Activated CD4-positive, alpha-beta memory T cell treated with anti-CD3 and anti-CD28 coated beads for 36 hours (primary cell): ENCODE measurements at regions of chr5 and their contacts with region 1.

Region 1: DNA sequence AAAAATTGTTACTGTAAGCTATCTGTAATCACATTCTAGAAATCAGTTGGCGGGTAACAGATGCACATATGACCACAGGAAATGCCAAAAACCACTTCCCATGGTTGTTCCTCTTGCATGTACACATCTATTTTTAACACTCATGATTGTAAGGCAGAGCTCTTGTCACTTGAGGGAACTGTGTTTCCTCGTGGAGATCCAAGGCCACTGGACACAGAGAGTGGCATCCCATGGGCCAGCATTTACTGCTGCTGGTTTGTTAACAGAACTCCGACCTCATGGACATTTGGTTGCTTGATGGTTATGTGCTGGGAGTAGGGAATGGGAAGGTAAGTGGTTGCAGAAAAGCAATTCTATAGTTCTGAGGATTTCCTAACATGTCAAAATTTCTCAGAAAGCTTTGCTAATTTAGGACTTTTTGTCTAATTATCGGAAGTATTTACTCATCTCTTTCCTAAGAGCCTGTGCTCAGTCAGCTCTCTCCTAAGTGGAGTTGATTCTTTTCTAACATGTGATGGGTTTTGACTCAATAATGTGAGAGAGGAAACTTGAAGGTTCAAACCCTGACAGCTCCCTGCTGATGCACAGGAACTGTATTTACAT is 202.0 kb upstream of the NR3C1 start:
- DNase-seq: peak; percentile 52
- H3K4me3 Mint-ChIP-seq: peak overlapping the region; percentile 28
- H3K27ac Mint-ChIP-seq: peak overlapping the region; percentile 86
- H3K4me1 Mint-ChIP-seq: peaks cover 34% of the 10 kb centered on the region
- H3K27me3 Mint-ChIP-seq: peaks cover 3% of the 10 kb centered on the region

Region 2: GRCh38 chr5:143057580-143057999 is 547.9 kb before region 1 on chr5:
- CTCF ChIA-PET with region 1: no interaction called
- POLR2A ChIA-PET with region 1: no interaction called
- intact Hi-C with region 1: loop called (anchors 1 kb)
- DNase-seq: no peak
- H3K4me3 Mint-ChIP-seq: no peak overlapping the region
- H3K27ac Mint-ChIP-seq: peak overlapping the region; percentile 85
- H3K4me1 Mint-ChIP-seq: peaks cover 69% of the 10 kb centered on the region
- H3K27me3 Mint-ChIP-seq: no peaks in the 10 kb centered on the region

Region 3: GRCh38 chr5:143213851-143214363 is 391.6 kb before region 1 on chr5:
- CTCF ChIA-PET with region 1: interaction called, 3 read pairs
- POLR2A ChIA-PET with region 1: no interaction called
- intact Hi-C with region 1: loop called (anchors 5 kb)
- DNase-seq: peak; percentile 63
- H3K4me3 Mint-ChIP-seq: no peak overlapping the region
- H3K27ac Mint-ChIP-seq: peak overlapping the region; percentile 79
- H3K4me1 Mint-ChIP-seq: peaks cover 57% of the 10 kb centered on the region
- H3K27me3 Mint-ChIP-seq: no peaks in the 10 kb centered on the region

Region 4: GRCh38 chr5:143435210-143435657 is 170.3 kb before region 1 on chr5:
- CTCF ChIA-PET with region 1: interaction called, 3 read pairs
- POLR2A ChIA-PET with region 1: interaction called, 5 read pairs
- intact Hi-C with region 1: loop called (anchors 1 kb)
- DNase-seq: peak; percentile 51
- H3K4me3 Mint-ChIP-seq: peak overlapping the region; percentile 81
- H3K27ac Mint-ChIP-seq: peak overlapping the region; percentile 87
- H3K4me1 Mint-ChIP-seq: peaks cover 68% of the 10 kb centered on the region
- H3K27me3 Mint-ChIP-seq: no peaks in the 10 kb centered on the region

Region 5: GRCh38 chr5:143550986-143551630 is 54.4 kb before region 1 on chr5:
- CTCF ChIA-PET with region 1: no interaction called
- POLR2A ChIA-PET with region 1: no interaction called
- intact Hi-C with region 1: no loop called
- DNase-seq: no peak
- H3K4me3 Mint-ChIP-seq: no peak overlapping the region
- H3K27ac Mint-ChIP-seq: no peak overlapping the region
- H3K4me1 Mint-ChIP-seq: no peaks in the 10 kb centered on the region
- H3K27me3 Mint-ChIP-seq: no peaks in the 10 kb centered on the region

Region 6: DNA sequence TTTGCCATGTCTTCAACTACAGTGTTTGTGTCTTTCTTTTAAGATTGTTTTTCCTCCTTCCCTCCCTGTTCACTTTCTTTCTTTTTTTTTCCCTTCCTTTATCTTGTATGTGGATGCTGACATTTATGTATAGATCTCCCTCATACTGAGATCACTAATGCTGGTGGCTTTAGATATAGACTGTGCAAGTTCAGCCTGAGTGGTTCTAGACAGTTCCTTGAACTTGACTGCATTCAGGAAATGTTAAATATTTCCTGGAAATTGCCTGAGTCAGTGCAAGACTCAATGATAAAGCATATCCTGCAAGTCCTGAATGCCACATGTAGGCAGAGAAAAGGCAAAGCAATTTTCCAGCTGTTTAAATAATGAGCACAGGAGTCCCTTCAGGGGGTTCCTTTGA is 19.5 kb before region 1 on chr5:
- CTCF ChIA-PET with region 1: no interaction called
- POLR2A ChIA-PET with region 1: interaction called, 4 read pairs
- intact Hi-C with region 1: loop called (anchors 1 kb)
- DNase-seq: no peak
- H3K4me3 Mint-ChIP-seq: no peak overlapping the region
- H3K27ac Mint-ChIP-seq: peak overlapping the region; percentile 56
- H3K4me1 Mint-ChIP-seq: peaks cover 51% of the 10 kb centered on the region
- H3K27me3 Mint-ChIP-seq: no peaks in the 10 kb centered on the region

Region 7: GRCh38 chr5:143648696-143649095 is 43.2 kb after region 1 on chr5:
- CTCF ChIA-PET with region 1: no interaction called
- POLR2A ChIA-PET with region 1: interaction called, 7 read pairs
- intact Hi-C with region 1: loop called (anchors 1 kb)
- DNase-seq: peak; percentile 21
- H3K4me3 Mint-ChIP-seq: no peak overlapping the region
- H3K27ac Mint-ChIP-seq: no peak overlapping the region
- H3K4me1 Mint-ChIP-seq: peaks cover 18% of the 10 kb centered on the region
- H3K27me3 Mint-ChIP-seq: peaks cover 3% of the 10 kb centered on the region

Region 8: GRCh38 chr5:144254552-144254951 is 649.0 kb after region 1 on chr5:
- CTCF ChIA-PET with region 1: no interaction called
- POLR2A ChIA-PET with region 1: no interaction called
- intact Hi-C with region 1: no loop called
- DNase-seq: no peak
- H3K4me3 Mint-ChIP-seq: no peak overlapping the region
- H3K27ac Mint-ChIP-seq: no peak overlapping the region
- H3K4me1 Mint-ChIP-seq: no peaks in the 10 kb centered on the region
- H3K27me3 Mint-ChIP-seq: peaks cover 4% of the 10 kb centered on the region